Heart right ventricle (tissue), 16 donors: ENCODE measurements at regions of chr20 and their contacts with region 1.

Region 1: DNA sequence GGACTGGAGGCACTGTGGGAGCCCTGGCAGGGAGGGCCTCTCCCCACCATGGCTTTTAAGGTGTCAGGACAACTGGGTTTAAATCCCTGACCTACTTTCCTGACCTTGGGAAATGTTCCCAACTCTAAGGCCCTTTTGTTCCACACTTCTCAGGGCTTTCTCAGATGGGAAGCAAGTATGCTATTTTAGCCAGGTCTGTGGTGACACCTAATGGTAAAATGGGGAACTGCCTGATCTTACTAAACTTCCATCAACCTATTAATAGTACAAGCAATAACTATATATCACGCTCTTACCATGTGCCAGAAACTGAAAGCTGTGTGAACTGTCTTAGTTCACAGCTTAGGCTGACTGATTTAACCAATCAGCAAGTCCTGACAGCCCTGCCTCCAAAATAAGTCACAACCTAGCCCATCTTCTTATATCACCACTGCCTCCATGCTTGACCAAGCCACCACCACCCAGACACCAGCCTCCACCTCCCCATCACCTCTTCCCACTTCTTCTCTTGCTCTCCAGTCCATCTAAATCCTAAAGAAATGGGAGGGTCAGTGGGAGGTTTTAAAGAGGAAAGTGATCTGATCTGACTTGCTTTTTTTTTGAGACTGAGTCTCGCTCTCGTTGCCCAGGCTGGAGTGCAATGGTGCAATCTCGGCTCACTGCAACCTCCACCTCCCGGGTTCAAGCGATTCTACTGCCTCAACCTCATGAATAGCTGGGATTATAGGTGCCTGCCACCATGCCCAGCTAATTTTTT is 6.9 kb upstream of the BLCAP start:
- DNase-seq: peak in 1 of 2 donors; percentile 64
- ATAC-seq: peak; percentile 81 to 92 (median 86)
- H3K4me3 ChIP-seq: no peak overlapping the region
- H3K27ac ChIP-seq: no peak overlapping the region
- H3K4me1 ChIP-seq: peaks cover 0 to 8% (median 0%) of the 10 kb centered on the region in 9 donors
- H3K27me3 ChIP-seq: no peaks in the 10 kb centered on the region
- CTCF ChIP-seq: peak; percentile 78 to 92 (median 88)

Region 2: DNA sequence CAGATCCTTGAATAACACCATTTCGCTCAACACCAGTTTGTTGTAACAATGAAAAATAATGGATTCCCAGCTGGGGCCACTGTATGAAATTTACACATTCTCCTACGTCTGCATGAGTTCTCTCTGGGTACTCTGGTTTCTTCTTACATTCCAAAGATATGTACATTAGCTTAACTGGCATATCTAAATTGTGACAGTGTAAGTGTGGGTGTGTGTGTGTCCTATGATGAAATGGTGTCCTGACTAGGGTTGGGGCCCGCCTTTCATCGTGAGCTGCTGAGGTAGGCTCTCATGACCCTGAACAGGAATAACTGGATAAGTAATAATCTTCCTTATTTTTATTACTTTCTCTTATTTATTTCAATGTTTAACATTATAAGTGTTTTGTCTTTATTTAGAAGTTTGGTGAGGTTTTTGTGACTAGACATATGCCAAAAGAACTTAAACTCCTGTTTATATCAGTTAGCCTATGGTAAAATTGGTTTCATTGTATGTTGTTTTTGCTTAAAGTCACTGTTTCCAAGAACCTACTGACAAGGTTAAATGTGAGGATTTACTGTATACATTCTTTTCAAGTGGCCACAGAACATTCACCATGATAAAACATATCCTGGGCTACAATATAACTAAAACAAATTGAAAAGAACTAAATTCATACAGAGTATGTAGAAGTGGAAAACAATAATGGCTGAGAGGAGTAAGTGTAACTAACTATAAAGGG is 481.2 kb before region 1 on chr20:
- intact Hi-C with region 1: no loop called
- DNase-seq: no peak
- ATAC-seq: no peak
- H3K4me3 ChIP-seq: no peak overlapping the region
- H3K27ac ChIP-seq: no peak overlapping the region
- H3K4me1 ChIP-seq: no peaks in the 10 kb centered on the region
- H3K27me3 ChIP-seq: no peaks in the 10 kb centered on the region
- CTCF ChIP-seq: no peak

Region 3: GRCh38 chr20:37192137-37192854 is 342.3 kb before region 1 on chr20:
- intact Hi-C with region 1: loop called in 5 of 10 experiments (anchors 1 to 5 kb)
- DNase-seq: peak; percentile 82 to 90
- ATAC-seq: peak; percentile 81 to 96 (median 90)
- H3K4me3 ChIP-seq: no peak overlapping the region
- H3K27ac ChIP-seq: peak overlapping the region in 2 of 10 donors; percentile 7 to 14
- H3K4me1 ChIP-seq: peaks cover 3 to 58% (median 48%) of the 10 kb centered on the region in 9 donors
- H3K27me3 ChIP-seq: no peaks in the 10 kb centered on the region
- CTCF ChIP-seq: peak; percentile 87 to 97 (median 90)

Region 4: GRCh38 chr20:37265152-37265551 is 269.4 kb before region 1 on chr20:
- intact Hi-C with region 1: loop called in 9 of 10 experiments (anchors 1 to 5 kb)
- DNase-seq: no peak
- ATAC-seq: no peak
- H3K4me3 ChIP-seq: no peak overlapping the region
- H3K27ac ChIP-seq: no peak overlapping the region
- H3K4me1 ChIP-seq: peaks cover 0 to 4% (median 0%) of the 10 kb centered on the region in 9 donors
- H3K27me3 ChIP-seq: peaks cover 0 to 29% (median 16%) of the 10 kb centered on the region in 7 donors
- CTCF ChIP-seq: no peak

Region 5: DNA sequence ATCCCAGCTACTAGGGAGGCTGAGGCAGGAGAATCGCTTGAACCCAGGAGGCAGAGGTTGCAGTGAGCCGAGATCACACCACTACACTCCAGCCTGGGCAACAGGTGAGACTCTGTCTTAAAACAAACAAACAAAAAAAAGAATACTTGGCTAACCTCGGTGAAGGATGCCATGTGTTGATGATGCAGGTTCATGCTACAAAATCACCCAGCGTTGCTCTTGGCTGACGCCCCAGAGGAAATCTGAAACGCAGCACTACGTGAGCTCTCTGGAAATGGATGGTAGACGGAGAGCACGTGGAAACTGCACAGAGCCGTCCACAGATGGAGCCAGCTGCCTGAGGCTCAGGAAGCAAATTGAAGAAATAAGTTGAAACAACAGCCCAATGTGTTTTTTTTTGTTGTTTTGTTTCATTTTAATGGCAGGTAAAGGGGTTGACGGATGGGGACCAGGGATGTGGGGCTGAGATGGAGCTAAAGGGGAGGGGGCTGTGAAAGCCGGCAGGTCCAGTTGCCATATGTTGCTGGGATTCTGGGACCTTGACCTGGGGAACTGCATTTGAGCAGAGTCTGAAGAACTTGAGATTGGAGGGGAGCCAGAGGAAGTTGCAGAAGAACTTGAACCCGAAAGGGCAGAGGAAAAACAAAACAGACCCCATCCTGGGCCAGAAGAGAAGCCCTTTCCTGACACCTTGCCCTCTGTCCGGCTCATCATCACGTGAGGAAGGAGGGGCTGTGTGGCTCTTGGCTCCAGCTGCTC is 257.9 kb before region 1 on chr20:
- intact Hi-C with region 1: loop called in 4 of 10 experiments (anchors 2 to 5 kb)
- DNase-seq: peak; percentile 37 to 52
- ATAC-seq: peak; percentile 75 to 94 (median 86)
- H3K4me3 ChIP-seq: peak overlapping the region in 1 of 10 donors; percentile 1
- H3K27ac ChIP-seq: peak overlapping the region in 3 of 10 donors; percentile 28 to 30 (median 29)
- H3K4me1 ChIP-seq: peaks cover 0 to 35% (median 8%) of the 10 kb centered on the region in 9 donors
- H3K27me3 ChIP-seq: peaks cover 0 to 6% (median 0%) of the 10 kb centered on the region in 7 donors
- CTCF ChIP-seq: peak in 8 of 9 donors; percentile 12 to 61 (median 46)

Region 6: DNA sequence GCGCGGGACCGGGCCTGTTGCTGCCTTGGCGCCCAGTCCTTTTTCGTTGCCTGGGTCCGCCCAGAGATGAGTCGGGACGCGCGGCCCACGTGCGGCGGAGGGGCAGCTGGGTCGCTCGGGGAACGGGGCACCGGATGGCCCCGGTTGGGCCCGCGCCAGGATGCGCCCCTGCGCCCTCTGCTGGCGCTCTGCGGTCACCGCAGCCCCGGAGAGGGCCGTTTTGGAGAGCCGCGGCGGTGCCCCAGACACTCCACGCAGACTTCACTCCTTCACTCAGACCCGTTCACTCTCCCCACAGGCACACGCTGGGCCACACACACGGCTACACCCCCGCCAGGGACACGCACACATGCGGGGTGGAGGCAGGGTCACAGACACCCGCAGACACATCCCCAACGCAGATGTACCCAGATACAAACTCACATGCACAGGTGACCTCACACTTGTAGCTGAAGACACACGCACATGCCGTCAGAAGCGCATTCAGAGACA is 149.8 kb before region 1 on chr20:
- intact Hi-C with region 1: loop called in 9 of 10 experiments (anchors 2 to 10 kb)
- DNase-seq: peak; percentile 46 to 75
- ATAC-seq: peak; percentile 82 to 90 (median 84)
- H3K4me3 ChIP-seq: peak overlapping the region; percentile 21 to 60 (median 57)
- H3K27ac ChIP-seq: peak overlapping the region in 4 of 10 donors; percentile 28 to 74 (median 36)
- H3K4me1 ChIP-seq: peaks cover 0 to 20% (median 5%) of the 10 kb centered on the region in 9 donors
- H3K27me3 ChIP-seq: no peaks in the 10 kb centered on the region
- CTCF ChIP-seq: peak; percentile 87 to 95 (median 90)

Region 7: DNA sequence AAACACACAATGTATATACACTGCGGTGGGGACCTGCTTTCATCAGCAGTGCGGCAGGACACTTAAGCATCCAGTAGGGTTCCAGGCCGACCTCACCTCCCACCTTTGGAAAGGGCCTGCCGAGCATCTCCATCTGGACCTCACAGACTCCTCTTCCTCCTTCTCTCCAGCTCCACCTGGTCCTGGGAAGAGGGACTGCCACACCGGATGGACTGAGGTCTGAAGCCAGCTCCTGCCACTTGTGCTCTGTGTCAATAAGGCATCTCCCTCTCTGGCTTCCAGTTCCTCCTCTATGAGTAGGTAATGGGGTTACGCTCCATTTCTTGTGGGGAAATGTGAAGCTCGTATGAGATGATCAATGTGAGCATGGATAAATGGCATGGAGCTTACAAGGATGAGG is 32.6 kb before region 1 on chr20:
- intact Hi-C with region 1: no loop called
- DNase-seq: no peak
- ATAC-seq: no peak
- H3K4me3 ChIP-seq: no peak overlapping the region
- H3K27ac ChIP-seq: no peak overlapping the region
- H3K4me1 ChIP-seq: peaks cover 0 to 40% (median 19%) of the 10 kb centered on the region in 9 donors
- H3K27me3 ChIP-seq: no peaks in the 10 kb centered on the region
- CTCF ChIP-seq: no peak

Region 8: DNA sequence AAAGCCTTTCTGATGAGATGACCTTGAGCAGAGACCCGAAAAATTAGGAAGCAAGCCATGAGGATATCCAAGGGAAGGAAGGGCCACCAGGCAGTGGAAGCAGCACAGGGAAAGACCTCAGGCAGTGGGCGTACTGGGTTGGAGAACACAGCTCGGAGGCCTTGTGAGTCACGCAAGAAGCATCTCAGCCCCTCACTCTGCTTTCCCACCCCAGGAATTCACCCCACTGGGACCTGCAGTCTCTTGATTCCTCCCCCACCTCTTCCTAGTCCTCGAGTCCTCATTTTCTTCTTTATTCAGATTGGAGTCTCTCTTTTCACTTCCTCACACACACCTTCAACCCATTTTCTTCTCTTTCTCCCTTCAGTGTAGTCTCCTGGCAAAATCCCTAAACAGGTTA is 526.0 kb after region 1 on chr20:
- intact Hi-C with region 1: no loop called
- DNase-seq: no peak
- ATAC-seq: no peak
- H3K4me3 ChIP-seq: no peak overlapping the region
- H3K27ac ChIP-seq: peak overlapping the region in 2 of 10 donors; percentile 3 to 28
- H3K4me1 ChIP-seq: peaks cover 0 to 25% (median 10%) of the 10 kb centered on the region in 9 donors
- H3K27me3 ChIP-seq: no peaks in the 10 kb centered on the region
- CTCF ChIP-seq: no peak